H1 (cell line): ENCODE measurements at regions of chr2 and their contacts with region 1.

Region 1: GRCh38 chr2:65800998-65801397 is 368.6 kb upstream of the SPRED2 start:
- DNase-seq: peak in 1 of 2 experiments; percentile 54
- H3K4me3 ChIP-seq: no peak overlapping the region
- H3K27ac ChIP-seq: no peak overlapping the region
- H3K4me1 ChIP-seq: no peaks in the 10 kb centered on the region
- H3K27me3 ChIP-seq: no peaks in the 10 kb centered on the region
- CTCF ChIP-seq: peak; percentile 57 to 67 (median 66)
- EP300 ChIP-seq: no peak
- POLR2A ChIP-seq: no peak
- RAD21 ChIP-seq: peak; percentile 62 to 70

Region 2: GRCh38 chr2:65638443-65638842 is 162.6 kb before region 1 on chr2:
- CTCF ChIA-PET with region 1: interaction called, 16 read pairs
- POLR2A ChIA-PET with region 1: no interaction called
- DNase-seq: no peak
- H3K4me3 ChIP-seq: no peak overlapping the region
- H3K27ac ChIP-seq: no peak overlapping the region
- H3K4me1 ChIP-seq: no peaks in the 10 kb centered on the region; a peak in 1 of 7 replicates
- H3K27me3 ChIP-seq: peaks cover 0 to 3% (median 3%) of the 10 kb centered on the region in 4 experiments; a peak in 2 of 7 replicates
- CTCF ChIP-seq: peak in 2 of 3 experiments; percentile 25 to 46; a peak in 2 of 4 replicates
- EP300 ChIP-seq: no peak
- POLR2A ChIP-seq: no peak
- RAD21 ChIP-seq: peak; percentile 10 to 31; a peak in 1 of 4 replicates

Region 3: GRCh38 chr2:65722028-65722778 is 78.8 kb before region 1 on chr2:
- CTCF ChIA-PET with region 1: interaction called, 14 read pairs
- POLR2A ChIA-PET with region 1: no interaction called
- DNase-seq: peak in 1 of 2 experiments; percentile 10
- H3K4me3 ChIP-seq: no peak overlapping the region
- H3K27ac ChIP-seq: no peak overlapping the region
- H3K4me1 ChIP-seq: peaks cover 0 to 3% (median 0%) of the 10 kb centered on the region in 4 experiments; a peak in 2 of 7 replicates
- H3K27me3 ChIP-seq: no peaks in the 10 kb centered on the region; a peak in 1 of 7 replicates
- CTCF ChIP-seq: peak; percentile 48 to 77 (median 69)
- EP300 ChIP-seq: no peak
- POLR2A ChIP-seq: no peak
- RAD21 ChIP-seq: peak; percentile 93

Region 4: DNA sequence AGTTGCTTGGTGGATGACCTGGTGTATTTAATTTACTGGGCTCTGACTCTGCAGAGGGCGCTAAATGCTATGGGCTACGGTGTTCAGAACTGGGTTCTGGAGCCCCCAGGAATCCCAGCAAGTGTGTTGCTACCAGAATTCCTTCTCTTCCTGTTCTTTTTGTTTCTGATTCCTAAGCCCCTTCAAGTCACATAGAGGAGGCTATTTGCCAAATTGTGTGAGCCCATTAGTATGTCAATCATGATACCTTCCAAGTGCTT is 10.4 kb before region 1 on chr2:
- CTCF ChIA-PET with region 1: no interaction called
- POLR2A ChIA-PET with region 1: no interaction called
- DNase-seq: no peak
- H3K4me3 ChIP-seq: no peak overlapping the region
- H3K27ac ChIP-seq: no peak overlapping the region
- H3K4me1 ChIP-seq: peaks cover 0 to 2% (median 0%) of the 10 kb centered on the region in 4 experiments; a peak in 2 of 7 replicates
- H3K27me3 ChIP-seq: no peaks in the 10 kb centered on the region; a peak in 1 of 7 replicates
- CTCF ChIP-seq: peak in 2 of 3 experiments; percentile 39 to 51; a peak in 3 of 4 replicates
- EP300 ChIP-seq: no peak
- POLR2A ChIP-seq: no peak
- RAD21 ChIP-seq: peak; percentile 55 to 59

Region 5: GRCh38 chr2:65813631-65814173 is 12.7 kb after region 1 on chr2:
- CTCF ChIA-PET with region 1: interaction called, 17 read pairs
- POLR2A ChIA-PET with region 1: no interaction called
- DNase-seq: no peak
- H3K4me3 ChIP-seq: no peak overlapping the region
- H3K27ac ChIP-seq: no peak overlapping the region
- H3K4me1 ChIP-seq: 0 out of 7 replicates have a peak, but pooled peaks cover 0 to 2% (median 0%) of the 10 kb centered on the region in 4 experiments
- H3K27me3 ChIP-seq: no peaks in the 10 kb centered on the region
- CTCF ChIP-seq: no peak
- EP300 ChIP-seq: no peak
- POLR2A ChIP-seq: no peak
- RAD21 ChIP-seq: no peak

Region 6: DNA sequence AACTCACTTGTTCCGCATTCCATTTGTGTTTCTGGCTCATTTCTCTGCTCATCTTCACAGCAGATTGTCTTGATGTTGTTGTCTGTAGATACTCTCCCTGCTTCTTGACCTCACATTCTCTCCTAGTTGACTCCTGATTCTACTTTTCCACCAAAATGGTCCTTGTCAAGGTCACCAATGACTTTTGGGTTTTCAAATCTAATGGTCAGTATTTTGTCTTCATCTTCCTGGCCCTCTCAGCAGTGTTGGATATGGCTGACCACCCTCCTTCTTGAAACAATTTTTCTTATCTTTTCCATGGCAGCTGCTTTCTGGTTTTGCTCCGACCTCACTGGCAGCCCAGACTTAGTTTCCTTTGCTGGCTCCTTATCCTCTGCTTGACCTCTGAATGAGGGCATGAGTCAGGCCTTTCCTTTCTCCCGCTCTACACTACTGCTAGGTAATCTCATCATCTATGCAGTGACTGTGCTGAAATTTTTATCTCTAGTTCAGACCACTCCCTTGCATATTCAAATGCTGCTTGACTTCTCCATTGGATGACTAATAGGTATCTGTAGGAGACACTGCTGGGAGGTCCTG is 18.0 kb after region 1 on chr2:
- CTCF ChIA-PET with region 1: interaction called, 17 read pairs
- POLR2A ChIA-PET with region 1: no interaction called
- DNase-seq: no peak
- H3K4me3 ChIP-seq: no peak overlapping the region
- H3K27ac ChIP-seq: no peak overlapping the region
- H3K4me1 ChIP-seq: 0 out of 7 replicates have a peak, but pooled peaks cover 0 to 2% (median 0%) of the 10 kb centered on the region in 4 experiments
- H3K27me3 ChIP-seq: no peaks in the 10 kb centered on the region
- CTCF ChIP-seq: no peak
- EP300 ChIP-seq: no peak
- POLR2A ChIP-seq: no peak
- RAD21 ChIP-seq: no peak